Heart right ventricle (tissue), 16 donors: ENCODE measurements at regions of chr5 and their contacts with region 1.

Region 1: GRCh38 chr5:139043157-139043905 is 154.8 kb downstream of the SIL1 start:
- DNase-seq: no peak
- ATAC-seq: peak in 3 of 8 donors; percentile 33 to 48 (median 42)
- H3K4me3 ChIP-seq: no peak overlapping the region
- H3K27ac ChIP-seq: no peak overlapping the region
- H3K4me1 ChIP-seq: peaks cover 0 to 4% (median 0%) of the 10 kb centered on the region in 9 donors
- H3K27me3 ChIP-seq: no peaks in the 10 kb centered on the region
- CTCF ChIP-seq: no peak

Region 2: GRCh38 chr5:138989720-138990119 is 53.6 kb before region 1 on chr5:
- intact Hi-C with region 1: loop called in 1 of 10 experiments (anchors 10 kb)
- DNase-seq: no peak
- ATAC-seq: no peak
- H3K4me3 ChIP-seq: no peak overlapping the region
- H3K27ac ChIP-seq: no peak overlapping the region
- H3K4me1 ChIP-seq: peaks cover 0 to 7% (median 0%) of the 10 kb centered on the region in 9 donors
- H3K27me3 ChIP-seq: no peaks in the 10 kb centered on the region
- CTCF ChIP-seq: no peak

Region 3: GRCh38 chr5:140381972-140382371 is 1338.6 kb after region 1 on chr5:
- intact Hi-C with region 1: no loop called
- DNase-seq: no peak
- ATAC-seq: no peak
- H3K4me3 ChIP-seq: no peak overlapping the region
- H3K27ac ChIP-seq: no peak overlapping the region
- H3K4me1 ChIP-seq: no peaks in the 10 kb centered on the region
- H3K27me3 ChIP-seq: no peaks in the 10 kb centered on the region
- CTCF ChIP-seq: no peak